ENCODE measurements at regions of chr22 and their contacts with region 1.

Region 1: DNA sequence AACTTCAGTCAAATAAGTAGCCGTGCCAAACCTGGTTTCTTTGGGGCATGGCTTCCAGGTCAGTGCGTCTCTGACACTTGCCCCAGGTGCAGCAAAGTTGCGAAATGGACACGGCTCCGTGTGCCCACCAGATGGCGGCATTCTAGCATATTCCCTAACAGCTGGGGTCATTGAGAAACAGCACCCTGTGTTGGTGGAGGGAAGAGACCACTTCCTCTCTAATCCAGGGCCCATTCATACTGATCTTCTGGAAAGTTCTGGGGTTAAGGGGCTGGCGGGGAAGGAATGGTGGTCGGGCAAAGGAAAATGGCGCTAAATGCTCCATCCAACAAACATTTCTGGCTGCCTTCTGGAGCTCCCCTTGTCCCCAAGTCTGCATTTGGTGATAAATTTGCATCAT is 141.2 kb upstream of the TIMP3 start:
- H3K4me3 ChIP-seq: no peak overlapping the region
- H3K27ac ChIP-seq: no peak overlapping the region
- H3K4me1 ChIP-seq: no peaks in the 10 kb centered on the region
- CTCF ChIP-seq: peak; percentile 67

Region 2: DNA sequence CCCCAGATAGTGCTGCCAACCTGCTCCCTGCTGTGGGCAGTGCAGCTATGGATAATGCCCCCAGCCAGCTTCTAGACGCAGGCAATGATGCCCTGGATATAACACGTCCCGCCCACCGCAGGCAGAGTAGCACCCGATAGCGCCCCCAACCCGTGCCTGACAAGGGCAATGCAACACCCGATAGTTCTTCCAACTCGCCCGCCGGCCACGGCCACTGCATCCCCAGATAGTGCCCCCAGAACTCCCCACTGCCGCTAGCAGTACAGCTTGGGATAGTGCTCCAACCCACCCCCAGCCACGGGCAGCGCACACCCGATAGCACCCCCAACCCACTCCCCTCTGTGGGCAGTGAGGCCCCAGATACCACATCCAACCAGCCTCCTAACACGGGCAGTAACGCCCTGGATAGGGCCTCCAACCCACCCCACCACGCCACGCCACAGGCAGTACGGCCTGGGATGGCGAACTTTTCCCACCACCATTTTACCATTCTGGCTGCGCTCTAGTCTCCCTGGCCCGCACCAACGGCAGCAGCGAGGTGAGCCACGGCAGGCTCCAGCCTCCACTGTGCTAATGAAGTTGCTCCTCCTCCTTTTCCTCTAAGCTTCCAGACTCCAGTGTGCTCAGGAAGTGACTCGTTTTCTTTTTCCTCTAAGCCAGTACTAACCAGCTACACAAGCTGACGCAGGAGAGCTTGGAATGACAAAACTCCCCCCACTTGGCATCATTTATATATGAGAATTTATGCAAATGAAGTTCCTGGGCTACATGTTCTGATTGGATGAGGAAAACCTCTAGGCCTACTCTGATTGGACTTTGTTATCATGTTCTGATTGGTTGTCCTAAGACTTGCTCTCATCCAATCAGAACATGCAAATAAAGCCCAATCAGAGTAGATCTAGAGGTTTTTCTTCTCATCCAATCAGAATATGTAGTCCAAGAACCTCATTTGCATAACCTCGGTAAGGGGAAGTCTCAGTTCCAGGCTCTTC is 305.6 kb before region 1 on chr22:
- CTCF ChIA-PET with region 1: no interaction called
- POLR2A ChIA-PET with region 1: no interaction called
- H3K4me3 ChIP-seq: no peak overlapping the region
- H3K27ac ChIP-seq: no peak overlapping the region
- H3K4me1 ChIP-seq: no peaks in the 10 kb centered on the region
- CTCF ChIP-seq: no peak

Region 3: GRCh38 chr22:32622004-32622743 is 38.1 kb before region 1 on chr22:
- CTCF ChIA-PET with region 1: interaction called, 13 read pairs
- POLR2A ChIA-PET with region 1: no interaction called
- H3K4me3 ChIP-seq: no peak overlapping the region
- H3K27ac ChIP-seq: no peak overlapping the region
- H3K4me1 ChIP-seq: peaks cover 7% of the 10 kb centered on the region
- CTCF ChIP-seq: no peak

Region 4: GRCh38 chr22:32649515-32650200 is 10.6 kb before region 1 on chr22:
- CTCF ChIA-PET with region 1: interaction called, 31 read pairs
- POLR2A ChIA-PET with region 1: no interaction called
- H3K4me3 ChIP-seq: no peak overlapping the region
- H3K27ac ChIP-seq: no peak overlapping the region
- H3K4me1 ChIP-seq: no peaks in the 10 kb centered on the region
- CTCF ChIP-seq: no peak

Region 5: DNA sequence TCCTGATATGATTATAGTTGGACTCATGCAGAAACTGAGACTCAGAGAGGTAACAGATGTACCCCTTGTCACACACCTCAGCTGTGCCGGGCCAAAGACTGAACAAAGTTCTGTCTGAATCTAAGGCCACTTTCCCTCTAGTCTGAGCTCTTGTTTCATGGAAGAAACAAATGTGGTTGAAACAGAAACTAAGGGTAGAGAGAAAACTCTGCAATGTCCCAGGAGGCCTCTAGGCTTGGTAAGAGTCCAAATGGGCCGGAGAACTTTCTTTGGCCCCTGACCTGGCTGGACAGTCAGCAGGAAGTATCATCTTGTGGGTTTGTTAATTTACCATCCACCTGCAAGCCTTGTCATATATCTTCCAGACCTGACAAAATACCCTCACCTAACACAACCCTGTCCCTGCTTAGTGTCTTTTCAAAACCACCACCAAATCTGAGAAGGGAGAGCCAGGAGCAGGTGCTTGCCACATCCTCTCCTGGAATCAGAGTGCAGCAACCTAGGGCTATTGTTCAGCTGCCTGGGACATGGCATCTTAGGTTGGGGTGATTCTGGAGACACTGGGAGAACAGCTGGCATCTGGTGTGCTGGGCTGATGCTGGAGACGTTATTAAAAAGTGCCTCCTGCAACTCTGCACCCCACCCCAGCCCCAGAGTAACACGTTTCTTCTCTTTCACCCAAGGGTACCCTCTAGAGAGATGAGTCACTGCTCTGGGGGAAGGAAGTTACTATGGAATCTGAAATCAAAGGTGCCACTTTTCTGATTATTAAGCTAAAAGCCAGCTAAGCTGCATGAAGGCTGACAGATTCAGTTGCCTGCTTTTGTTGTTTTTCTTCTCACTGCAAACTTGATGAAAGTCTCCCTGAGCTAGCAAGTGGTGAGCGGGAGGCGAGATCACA is 14.9 kb after region 1 on chr22:
- CTCF ChIA-PET with region 1: interaction called, 25 read pairs
- POLR2A ChIA-PET with region 1: no interaction called
- H3K4me3 ChIP-seq: no peak overlapping the region
- H3K27ac ChIP-seq: no peak overlapping the region
- H3K4me1 ChIP-seq: no peaks in the 10 kb centered on the region
- CTCF ChIP-seq: no peak

Region 6: DNA sequence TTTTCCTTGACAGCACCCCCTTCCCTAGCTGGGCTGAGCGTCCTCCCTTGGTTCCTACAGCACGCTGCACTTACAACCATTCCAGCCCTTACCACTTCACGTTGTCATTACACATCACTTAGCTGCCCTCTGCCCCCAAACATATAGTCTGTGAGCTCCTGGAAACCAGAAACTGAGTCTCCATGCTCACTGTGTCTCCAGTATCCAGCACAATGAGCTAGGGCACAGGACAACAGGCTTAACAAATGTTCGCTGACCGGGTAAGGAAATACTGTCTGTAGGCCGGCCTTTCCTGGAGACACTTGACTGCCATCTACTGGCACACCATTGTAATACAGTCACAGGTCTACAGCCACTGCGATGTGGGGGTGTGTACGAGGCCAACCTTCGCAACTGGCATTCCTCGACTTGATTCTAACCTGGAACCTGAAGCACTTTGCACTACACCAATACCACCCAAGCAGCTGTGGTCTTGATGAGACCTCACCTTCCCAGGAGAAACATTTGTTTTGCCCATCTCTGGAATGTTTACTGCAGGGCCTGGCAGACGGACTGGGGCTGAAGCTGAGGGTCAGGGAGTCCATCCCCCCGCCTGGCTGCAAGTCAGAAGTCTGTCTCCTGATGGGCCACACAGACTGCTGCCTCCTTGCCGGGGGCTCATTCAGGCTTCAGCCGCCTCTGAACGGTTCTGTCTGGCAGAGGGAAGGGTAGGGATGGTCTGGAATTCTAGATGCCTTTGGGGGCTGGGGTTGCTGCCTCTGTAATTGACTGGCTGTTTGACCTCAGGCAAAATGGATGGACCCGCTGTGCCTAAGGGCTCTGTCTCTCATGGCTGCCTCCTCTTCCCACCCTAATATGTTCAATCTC is 325.8 kb after region 1 on chr22:
- CTCF ChIA-PET with region 1: interaction called, 20 read pairs
- POLR2A ChIA-PET with region 1: no interaction called
- H3K4me3 ChIP-seq: no peak overlapping the region
- H3K27ac ChIP-seq: no peak overlapping the region
- H3K4me1 ChIP-seq: no peaks in the 10 kb centered on the region
- CTCF ChIP-seq: peak; percentile 75

Region 7: DNA sequence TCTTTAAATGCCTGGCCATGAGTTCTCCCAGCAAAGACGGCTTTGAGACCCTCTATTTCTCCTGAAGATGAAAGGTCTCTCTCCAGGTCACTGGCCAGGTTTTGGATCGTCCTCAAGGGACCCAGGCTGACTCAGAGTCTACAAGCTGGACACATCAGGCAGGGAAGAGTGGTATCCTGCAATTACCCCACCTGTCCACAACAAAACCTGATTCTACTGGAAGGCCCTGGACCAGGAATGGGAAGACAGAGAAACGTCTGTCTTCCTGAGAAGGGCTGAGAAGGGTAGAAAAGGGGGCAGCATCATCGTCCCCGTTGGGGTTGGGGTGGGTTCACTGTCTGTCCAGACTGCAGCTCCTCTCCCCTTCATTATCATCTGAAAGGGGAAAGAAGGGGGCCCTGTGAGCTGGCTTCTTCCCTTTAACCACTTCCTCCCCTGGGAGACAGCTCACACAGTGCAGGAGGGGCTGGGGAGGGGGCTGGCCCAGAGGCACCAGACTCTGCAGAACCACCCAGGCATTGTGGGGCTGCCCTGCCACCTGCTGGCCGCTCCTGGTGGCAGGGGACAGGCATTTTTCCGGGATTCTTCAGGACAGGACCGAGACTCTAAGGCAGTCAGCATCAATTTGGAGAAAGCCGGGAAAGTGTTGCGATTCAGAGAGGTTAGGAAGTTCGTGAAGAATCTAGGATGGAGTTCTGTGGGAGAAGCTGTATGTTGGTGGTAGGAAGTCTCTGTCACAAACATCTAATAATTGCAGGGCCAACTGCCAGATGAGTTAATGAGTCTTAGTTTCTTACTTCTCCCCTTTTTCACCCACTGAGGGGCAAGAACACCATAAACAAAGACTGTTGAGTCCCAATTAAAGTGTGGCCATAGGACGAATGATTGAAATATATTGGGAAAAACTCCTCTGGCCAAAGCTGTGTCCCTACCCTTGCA is 340.3 kb after region 1 on chr22:
- CTCF ChIA-PET with region 1: interaction called, 32 read pairs
- POLR2A ChIA-PET with region 1: no interaction called
- H3K4me3 ChIP-seq: no peak overlapping the region
- H3K27ac ChIP-seq: no peak overlapping the region
- H3K4me1 ChIP-seq: no peaks in the 10 kb centered on the region
- CTCF ChIP-seq: peak; percentile 76

Measured in HEK293 (cell line).